PC-9 (cell line): ENCODE measurements at regions of chr22 and their contacts with region 1.

Region 1: DNA sequence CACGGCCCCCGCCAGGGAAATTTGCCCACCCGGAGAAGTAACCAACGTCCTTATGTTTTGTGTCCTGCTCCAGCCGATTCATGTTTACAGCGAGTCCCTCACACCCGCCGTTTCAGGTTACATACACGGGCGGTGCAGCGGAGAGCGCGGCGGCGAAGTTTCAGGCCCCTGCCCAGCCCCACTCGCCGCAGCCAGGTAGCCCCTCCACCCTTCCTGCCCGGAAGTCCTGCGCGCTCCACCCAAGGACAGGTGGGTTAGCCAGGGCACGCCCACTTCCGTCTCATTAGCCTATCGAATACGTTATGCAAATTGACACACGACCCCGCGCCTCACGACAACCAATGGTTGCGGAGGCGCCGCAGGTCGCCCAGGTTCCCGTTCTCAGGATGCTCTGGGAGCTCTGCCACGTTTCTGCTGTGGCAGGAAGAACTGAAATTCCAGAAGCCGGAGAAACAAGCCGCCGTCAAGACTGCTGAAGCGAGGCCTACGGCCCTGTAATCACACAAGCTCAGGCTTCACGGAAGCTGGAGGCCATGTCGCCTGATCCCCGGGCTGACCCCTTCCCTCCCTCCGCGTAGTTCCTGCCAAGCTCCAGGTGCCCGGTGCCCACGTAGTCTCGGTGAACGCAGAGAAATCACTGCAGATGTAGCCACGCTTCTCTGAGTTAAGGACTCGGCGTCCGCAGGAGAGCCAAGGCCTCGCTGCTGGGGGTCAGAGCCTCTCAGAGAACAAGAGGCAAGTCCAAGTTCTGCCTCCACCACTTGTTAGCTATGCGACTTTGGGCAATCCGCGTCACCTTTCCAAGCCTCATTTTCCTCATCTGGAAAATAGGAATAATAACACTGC is 22.4 kb upstream of the MYH9 start:
- DNase-seq: peak; percentile 99 to 100
- H3K4me3 ChIP-seq: peak overlapping the region; percentile 43
- H3K27ac ChIP-seq: peak overlapping the region; percentile 89
- H3K4me1 ChIP-seq: peaks cover 69% of the 10 kb centered on the region
- H3K27me3 ChIP-seq: no peaks in the 10 kb centered on the region
- CTCF ChIP-seq: 0 out of 2 replicates have a peak, but pooled peaks have one; percentile 30

Region 2: DNA sequence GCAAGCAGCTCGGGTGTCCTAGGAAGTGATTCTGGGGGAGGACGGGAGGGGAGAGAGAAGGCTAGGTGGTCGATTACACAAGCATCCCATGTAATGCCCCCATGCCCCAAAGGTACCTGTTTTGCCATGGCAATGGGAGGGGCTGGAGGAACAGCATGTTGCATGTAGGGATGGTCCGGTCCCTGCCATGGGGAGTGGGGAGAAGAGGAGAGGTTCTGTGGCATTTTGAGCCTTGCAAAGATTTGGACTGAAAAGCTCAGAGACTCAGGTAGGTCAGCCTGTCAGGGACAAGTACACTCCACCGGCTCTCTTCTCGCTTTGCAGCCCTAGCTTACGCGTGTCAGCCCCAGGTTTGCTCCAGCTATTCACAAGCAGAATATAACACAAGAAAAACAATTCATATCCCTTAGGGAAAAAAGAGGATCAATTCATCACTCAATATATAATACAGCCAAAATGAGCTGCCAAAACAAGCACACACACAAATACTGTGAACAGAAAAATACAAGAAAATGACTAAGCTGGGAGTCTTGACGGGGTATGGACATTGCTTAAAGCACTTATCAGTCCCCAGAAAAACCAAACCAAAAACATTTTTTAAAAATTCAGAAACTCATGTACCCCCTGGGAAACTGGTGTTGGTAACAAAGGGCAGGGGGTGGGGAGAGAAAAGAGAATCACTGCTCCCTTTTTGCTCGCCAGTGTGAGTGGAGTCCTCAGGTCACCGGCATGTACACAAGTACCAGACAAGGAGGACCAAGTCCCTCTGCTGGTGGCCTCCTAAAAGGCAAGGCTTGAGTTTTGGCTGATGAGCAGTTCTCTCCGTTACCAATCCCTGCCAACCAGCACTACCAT is 670.8 kb before region 1 on chr22:
- CTCF ChIA-PET with region 1: no interaction called
- POLR2A ChIA-PET with region 1: no interaction called
- intact Hi-C with region 1: no loop called
- DNase-seq: no peak
- H3K4me3 ChIP-seq: no peak overlapping the region
- H3K27ac ChIP-seq: no peak overlapping the region
- H3K4me1 ChIP-seq: peaks cover 20% of the 10 kb centered on the region
- H3K27me3 ChIP-seq: no peaks in the 10 kb centered on the region
- CTCF ChIP-seq: peak; percentile 52

Region 3: GRCh38 chr22:36286471-36287224 is 123.5 kb before region 1 on chr22:
- CTCF ChIA-PET with region 1: no interaction called
- POLR2A ChIA-PET with region 1: no interaction called
- intact Hi-C with region 1: no loop called
- DNase-seq: peak; percentile 62 to 79
- H3K4me3 ChIP-seq: no peak overlapping the region
- H3K27ac ChIP-seq: no peak overlapping the region
- H3K4me1 ChIP-seq: no peaks in the 10 kb centered on the region
- H3K27me3 ChIP-seq: no peaks in the 10 kb centered on the region
- CTCF ChIP-seq: peak; percentile 97

Region 4: GRCh38 chr22:36359181-36359996 is 50.7 kb before region 1 on chr22:
- CTCF ChIA-PET with region 1: interaction called, 15 read pairs
- POLR2A ChIA-PET with region 1: no interaction called
- intact Hi-C with region 1: no loop called
- DNase-seq: no peak
- H3K4me3 ChIP-seq: no peak overlapping the region
- H3K27ac ChIP-seq: peak overlapping the region; percentile 25
- H3K4me1 ChIP-seq: peaks cover 75% of the 10 kb centered on the region
- H3K27me3 ChIP-seq: no peaks in the 10 kb centered on the region
- CTCF ChIP-seq: no peak

Region 5: DNA sequence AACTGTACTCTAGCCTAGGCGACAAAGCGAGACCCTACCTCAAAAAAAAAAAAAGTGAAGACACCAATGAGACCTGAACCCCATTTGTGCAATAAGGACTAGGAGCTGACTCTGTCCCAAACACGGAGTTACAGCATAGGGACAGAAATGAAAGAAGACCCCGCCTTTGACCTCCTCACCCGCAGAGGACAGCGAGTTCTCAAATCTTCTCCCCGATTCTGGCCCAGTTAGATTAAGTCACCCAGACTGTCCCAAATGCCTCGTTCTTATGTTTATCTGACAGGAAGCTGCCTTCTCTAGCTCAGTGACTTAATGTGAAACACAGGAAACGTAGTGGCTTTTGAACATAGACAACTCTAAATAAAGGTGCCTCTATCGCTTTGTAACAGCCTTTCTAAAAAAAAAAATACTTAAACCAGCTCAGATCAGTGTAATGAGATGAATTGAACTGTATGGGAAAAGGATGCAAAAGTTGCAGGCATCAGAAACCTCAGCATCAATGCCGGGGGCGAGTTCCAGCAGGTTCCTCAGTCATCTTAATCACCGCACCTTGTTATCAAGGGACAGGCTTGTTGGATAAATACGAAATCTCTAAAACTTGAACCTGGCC is 33.0 kb before region 1 on chr22:
- CTCF ChIA-PET with region 1: no interaction called
- POLR2A ChIA-PET with region 1: interaction called, 18 read pairs
- intact Hi-C with region 1: loop called (anchors 5 kb)
- DNase-seq: no peak
- H3K4me3 ChIP-seq: no peak overlapping the region
- H3K27ac ChIP-seq: peak overlapping the region; percentile 4; the same call in 1 of the 2 replicates
- H3K4me1 ChIP-seq: peaks cover 93% of the 10 kb centered on the region
- H3K27me3 ChIP-seq: no peaks in the 10 kb centered on the region
- CTCF ChIP-seq: no peak

Region 6: DNA sequence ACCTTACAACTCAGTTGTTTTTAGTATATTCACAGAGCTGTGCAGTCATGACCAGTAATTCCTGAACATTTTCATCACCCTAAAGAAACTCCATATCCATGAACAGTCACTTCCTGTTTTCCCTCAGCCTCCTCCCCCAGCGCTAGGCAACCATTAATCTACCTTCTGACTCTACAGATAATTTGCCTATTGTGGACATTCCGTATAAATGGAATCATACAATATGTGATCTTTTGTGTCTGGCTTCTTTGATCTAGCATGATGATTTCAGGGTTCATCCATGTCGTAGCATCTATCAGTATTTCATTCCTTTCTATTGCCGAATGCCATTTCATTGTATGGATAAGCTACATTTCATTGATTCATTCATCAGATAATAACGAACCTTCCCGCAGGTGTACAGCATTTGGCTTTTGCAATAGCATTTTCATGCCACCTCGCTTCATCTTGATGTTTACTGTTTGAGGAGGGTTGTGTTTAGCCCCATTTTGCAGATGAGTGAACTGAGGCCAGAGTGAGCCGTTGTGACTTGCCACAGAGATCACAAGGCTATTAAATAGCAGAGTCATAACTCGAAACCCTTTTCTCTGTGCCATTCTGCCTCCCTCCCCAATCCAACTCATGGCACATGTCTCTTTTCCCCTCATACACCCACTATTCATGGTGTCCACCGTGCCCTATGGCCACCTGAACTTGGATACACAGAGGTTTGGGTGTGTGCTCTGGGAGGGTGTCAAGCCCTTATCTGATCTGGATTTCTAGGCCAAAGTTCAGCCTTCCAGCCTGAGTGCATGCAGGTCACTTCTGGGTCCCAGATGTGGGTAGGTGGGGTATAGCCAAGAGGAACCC is 11.3 kb before region 1 on chr22:
- CTCF ChIA-PET with region 1: no interaction called
- POLR2A ChIA-PET with region 1: interaction called, 7 read pairs
- intact Hi-C with region 1: loop called (anchors 1 kb)
- DNase-seq: peak; percentile 45 to 91
- H3K4me3 ChIP-seq: no peak overlapping the region
- H3K27ac ChIP-seq: peak overlapping the region; percentile 78
- H3K4me1 ChIP-seq: peaks cover 76% of the 10 kb centered on the region
- H3K27me3 ChIP-seq: no peaks in the 10 kb centered on the region
- CTCF ChIP-seq: no peak

Region 7: GRCh38 chr22:36454916-36455570 is 44.9 kb after region 1 on chr22:
- CTCF ChIA-PET with region 1: interaction called, 4 read pairs
- POLR2A ChIA-PET with region 1: interaction called, 5 read pairs
- intact Hi-C with region 1: loop called (anchors 2 kb)
- DNase-seq: peak; percentile 81 to 96
- H3K4me3 ChIP-seq: peak overlapping the region; percentile 61
- H3K27ac ChIP-seq: peak overlapping the region; percentile 7; the same call in 1 of the 2 replicates
- H3K4me1 ChIP-seq: peaks cover 62% of the 10 kb centered on the region
- H3K27me3 ChIP-seq: no peaks in the 10 kb centered on the region
- CTCF ChIP-seq: 0 out of 2 replicates have a peak, but pooled peaks have one; percentile 15

Region 8: GRCh38 chr22:36461669-36462649 is 51.8 kb after region 1 on chr22:
- CTCF ChIA-PET with region 1: no interaction called
- POLR2A ChIA-PET with region 1: interaction called, 3 read pairs
- intact Hi-C with region 1: loop called (anchors 1 kb)
- DNase-seq: peak; percentile 96 to 99
- H3K4me3 ChIP-seq: no peak overlapping the region
- H3K27ac ChIP-seq: peak overlapping the region; percentile 72
- H3K4me1 ChIP-seq: peaks cover 92% of the 10 kb centered on the region
- H3K27me3 ChIP-seq: no peaks in the 10 kb centered on the region
- CTCF ChIP-seq: no peak

Region 9: DNA sequence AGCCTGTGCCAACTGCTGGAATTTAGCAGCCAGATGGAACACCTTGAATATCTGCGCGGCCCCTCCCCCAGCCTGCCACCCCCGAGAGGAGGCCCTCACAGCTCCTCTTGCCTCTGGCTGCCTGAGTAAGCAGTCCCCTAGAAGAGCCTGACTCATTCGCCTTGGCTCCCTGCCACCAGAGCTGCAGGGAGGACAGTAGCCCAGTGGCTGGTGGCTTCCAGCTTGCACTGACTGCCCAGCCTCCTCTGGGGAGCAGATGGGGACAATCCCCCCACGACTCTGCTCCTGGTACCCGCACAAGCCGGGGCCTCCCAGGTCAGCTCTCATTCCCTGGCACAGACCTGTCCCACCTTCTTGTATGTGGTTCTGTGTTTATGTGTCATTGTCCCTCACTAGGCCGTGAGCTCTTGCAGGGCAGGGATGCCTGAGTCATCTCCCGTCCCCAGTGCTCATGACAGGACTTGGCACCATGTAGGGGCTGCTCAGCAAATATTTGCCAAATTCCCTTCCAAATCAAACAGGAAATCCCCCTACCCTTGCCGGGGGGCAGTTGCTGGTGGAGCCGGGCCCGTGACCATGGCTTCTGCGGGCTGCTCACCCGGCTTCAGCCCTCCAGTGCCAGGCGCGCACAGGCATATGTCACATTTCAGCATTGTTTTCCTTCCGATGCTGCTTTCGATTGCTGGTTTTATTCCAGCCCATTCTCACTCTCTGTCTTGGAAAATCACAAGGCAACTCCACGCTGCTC is 249.8 kb after region 1 on chr22:
- CTCF ChIA-PET with region 1: no interaction called
- POLR2A ChIA-PET with region 1: no interaction called
- intact Hi-C with region 1: no loop called
- DNase-seq: peak; percentile 98 to 99
- H3K4me3 ChIP-seq: peak overlapping the region; percentile 48
- H3K27ac ChIP-seq: peak overlapping the region; percentile 79
- H3K4me1 ChIP-seq: peaks cover 28% of the 10 kb centered on the region
- H3K27me3 ChIP-seq: no peaks in the 10 kb centered on the region
- CTCF ChIP-seq: no peak

Region 10: GRCh38 chr22:36689583-36689982 is 279.4 kb after region 1 on chr22:
- CTCF ChIA-PET with region 1: no interaction called
- POLR2A ChIA-PET with region 1: no interaction called
- intact Hi-C with region 1: no loop called
- DNase-seq: no peak
- H3K4me3 ChIP-seq: no peak overlapping the region
- H3K27ac ChIP-seq: no peak overlapping the region
- H3K4me1 ChIP-seq: no peaks in the 10 kb centered on the region
- H3K27me3 ChIP-seq: peaks cover 46% of the 10 kb centered on the region
- CTCF ChIP-seq: no peak